ENCODE measurements at regions of chr15 and their contacts with region 1.

Region 1: DNA sequence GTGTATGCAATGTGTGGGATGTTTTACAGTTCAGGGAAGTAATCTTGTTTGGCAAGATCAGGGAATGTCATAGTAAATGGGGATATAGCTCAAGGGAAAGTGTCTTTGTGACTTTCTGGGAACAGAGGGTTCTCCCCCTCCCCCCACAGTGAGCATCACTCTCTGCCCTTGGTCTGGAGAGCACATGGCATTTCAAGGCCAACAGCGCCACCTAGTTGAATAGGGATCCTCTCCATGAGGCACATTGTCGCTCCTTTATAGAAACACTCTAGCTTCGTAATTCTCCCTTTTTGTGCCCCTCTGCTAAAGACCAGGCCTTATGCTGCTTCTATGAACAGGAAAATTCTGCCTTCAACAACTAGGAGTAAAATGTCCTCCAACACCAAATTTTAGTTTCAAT is 37.1 kb upstream of the ARNT2 start:
- DNase-seq: no peak
- ATAC-seq: no peak
- H3K4me3 ChIP-seq: no peak overlapping the region
- H3K27ac ChIP-seq: no peak overlapping the region
- H3K4me1 ChIP-seq: no peaks in the 10 kb centered on the region
- H3K27me3 ChIP-seq: no peaks in the 10 kb centered on the region
- CTCF ChIP-seq: no peak

Region 2: DNA sequence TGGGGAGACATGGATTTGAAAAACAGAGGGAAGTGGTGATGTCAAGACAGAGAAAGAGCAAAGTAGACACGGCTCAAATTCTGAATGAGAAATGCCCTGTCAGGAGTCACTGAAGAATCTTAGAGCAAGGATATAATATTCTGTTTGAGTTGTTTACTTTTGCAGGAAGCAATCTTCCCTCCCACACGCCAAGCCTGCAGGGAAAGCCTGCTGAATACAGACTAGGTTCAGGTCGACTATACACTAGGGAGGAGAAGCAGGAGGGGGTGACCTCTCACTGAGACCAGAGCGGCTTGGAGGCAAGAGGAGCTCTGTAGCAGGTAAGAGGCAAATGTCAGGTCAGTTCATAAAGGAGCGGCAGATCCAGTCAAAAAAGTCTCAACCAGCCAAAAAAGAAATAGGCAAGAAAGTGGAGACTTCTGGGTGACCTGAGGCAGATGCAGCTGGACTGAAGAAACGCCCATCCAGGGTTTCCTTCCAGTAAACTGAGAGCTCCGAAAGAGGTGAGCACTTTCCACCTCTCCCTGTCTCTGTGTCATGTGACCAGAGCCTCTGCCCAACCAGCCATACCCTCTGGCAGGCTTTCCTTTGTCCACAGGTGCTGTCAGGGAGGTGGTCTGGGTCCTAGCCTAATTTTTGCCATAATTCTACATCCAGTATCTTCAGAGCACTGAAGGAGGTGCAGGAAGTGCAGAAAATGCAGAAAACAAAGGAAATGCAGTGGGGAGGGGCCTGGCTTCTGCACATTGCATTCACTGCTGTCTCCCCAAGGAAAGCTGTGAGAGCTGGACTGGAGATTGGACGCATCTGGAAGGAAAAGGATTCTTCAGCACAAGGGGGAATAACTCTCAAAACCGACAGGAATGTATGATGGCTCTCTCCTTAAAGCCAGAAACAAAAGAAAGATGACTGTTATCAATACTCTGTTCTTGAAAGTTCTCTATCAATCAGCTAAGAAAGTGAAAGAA is 77.3 kb before region 1 on chr15:
- intact Hi-C with region 1: loop called in 1 of 2 experiments (anchors 10 kb)
- DNase-seq: no peak
- ATAC-seq: no peak
- H3K4me3 ChIP-seq: no peak overlapping the region
- H3K27ac ChIP-seq: no peak overlapping the region
- H3K4me1 ChIP-seq: no peaks in the 10 kb centered on the region
- H3K27me3 ChIP-seq: peaks cover 0 to 3% (median 0%) of the 10 kb centered on the region in 3 donors
- CTCF ChIP-seq: no peak

Region 3: DNA sequence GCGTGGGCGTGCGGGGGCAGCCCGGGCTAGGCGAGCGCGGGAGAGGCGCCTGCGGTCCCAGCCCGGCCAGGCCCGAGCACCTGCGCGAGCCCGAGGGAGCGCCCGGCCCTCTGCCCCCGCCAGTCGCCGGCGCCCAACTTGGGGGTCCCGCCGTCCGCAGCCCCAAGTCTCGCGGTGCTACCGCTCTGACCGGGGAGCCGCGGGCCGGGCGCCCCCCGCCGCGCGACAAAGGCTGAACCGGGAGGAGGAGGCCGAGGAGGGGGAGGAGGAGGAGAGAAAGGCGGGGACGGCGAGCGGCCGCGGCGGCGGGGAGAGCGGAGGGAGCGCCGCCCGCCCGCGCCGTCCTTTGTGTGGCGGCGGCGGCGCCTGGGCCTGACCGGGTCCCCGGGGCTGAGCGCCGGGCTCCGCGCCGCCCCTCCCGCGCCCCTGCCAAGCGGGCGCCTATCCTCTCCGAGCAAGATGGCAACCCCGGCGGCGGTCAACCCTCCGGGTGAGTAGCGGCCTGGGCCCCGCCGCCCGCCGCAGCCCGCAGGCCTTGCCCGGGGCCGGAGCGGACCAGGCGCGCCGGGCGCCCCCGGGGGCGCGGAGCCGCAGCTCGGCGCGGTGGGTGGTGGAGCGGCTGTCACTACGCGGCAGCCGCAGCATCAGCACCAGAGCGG is 37.1 kb after region 1 on chr15 and contains the start of gene ARNT2:
- intact Hi-C with region 1: no loop called
- DNase-seq: peak; percentile 18 to 61
- ATAC-seq: peak; percentile 67 to 84 (median 72)
- H3K4me3 ChIP-seq: peak within 1 kb of the TSS; percentile 69
- H3K27ac ChIP-seq: peak within 1 kb of the TSS; percentile 50
- H3K4me1 ChIP-seq: peaks cover 11% of the 10 kb centered on the region
- H3K27me3 ChIP-seq: no peaks in the 10 kb centered on the region
- CTCF ChIP-seq: no peak
- total RNA-seq, gene ARNT2: 2.7 to 12.2 (median 8.0) TPM